Activated T-helper 2 cell treated with anti-CD3 and anti-CD28 coated beads, Interferon-gamma antibody, Interleukin-2, Interleukin-4, amounts not matched to agents 10 μg/mL and 5 μg/mL and 100 μg/mL, durations not matched to agents 14 hours and 24 hours and 36 hours (primary cell): ENCODE measurements at regions of chr3 and their contacts with region 1.

Region 1: DNA sequence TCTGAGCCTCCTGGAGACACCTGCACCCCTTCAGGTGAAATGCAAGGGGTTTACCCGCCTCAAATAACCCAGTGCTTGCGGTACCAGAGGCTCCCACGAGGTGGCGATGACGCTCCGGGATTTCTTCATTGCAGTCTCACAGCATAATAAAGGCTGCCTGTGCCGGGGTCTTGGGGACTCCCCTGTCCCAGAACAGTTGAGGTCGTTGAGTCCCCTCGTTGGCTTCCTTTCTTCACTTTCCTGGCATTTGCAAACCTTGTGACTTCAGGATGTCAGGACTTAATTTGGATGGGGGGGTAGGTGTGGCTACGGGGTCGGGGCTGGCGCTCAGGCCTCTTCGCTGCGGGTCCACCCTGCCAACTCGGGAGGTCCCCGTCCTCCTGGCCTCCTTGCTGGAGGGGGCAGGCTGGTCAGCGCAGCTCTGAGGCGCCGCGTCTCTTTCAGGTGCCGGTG is 1.3 kb downstream of the GNAT1 start:
- DNase-seq: peak; percentile 75
- H3K4me3 Mint-ChIP-seq: no peak overlapping the region
- H3K27ac Mint-ChIP-seq: no peak overlapping the region
- H3K4me1 Mint-ChIP-seq: peaks cover 2% of the 10 kb centered on the region
- H3K27me3 Mint-ChIP-seq: peaks cover 20% of the 10 kb centered on the region

Region 2: DNA sequence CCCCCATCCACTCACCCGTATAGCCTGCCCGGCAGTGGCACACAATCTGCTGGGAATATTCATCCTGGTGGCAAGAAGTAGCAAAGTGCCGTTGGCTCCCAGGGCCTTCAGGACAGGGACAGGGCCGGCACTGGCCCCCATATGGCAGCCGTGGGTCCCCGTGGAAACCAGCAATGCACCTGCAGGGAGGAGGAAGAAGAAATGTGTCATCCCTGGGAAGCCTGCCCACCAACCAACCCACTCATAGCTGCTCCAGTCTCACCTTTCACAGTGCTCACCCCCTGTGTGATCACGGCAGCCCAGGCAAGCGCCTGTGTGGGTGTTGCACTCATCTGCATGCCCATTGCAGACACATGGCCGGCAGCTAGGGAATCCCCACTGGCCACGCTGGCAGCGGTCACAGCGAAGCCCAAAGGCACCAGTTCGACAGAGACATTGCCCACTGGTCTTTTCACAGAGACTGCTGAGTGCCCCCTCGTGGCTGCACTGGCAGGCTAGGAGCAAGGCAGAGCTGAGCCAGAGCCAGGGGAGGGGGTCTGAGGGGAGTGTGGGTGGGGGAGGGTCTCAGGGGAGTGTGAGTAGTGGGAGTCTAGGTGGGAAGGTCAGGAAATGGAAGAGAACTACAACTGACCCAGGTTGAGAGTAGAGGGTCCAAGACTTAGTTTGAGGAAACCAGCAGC is 1067.6 kb before region 1 on chr3:
- intact Hi-C with region 1: no loop called
- DNase-seq: no peak
- H3K4me3 Mint-ChIP-seq: no peak overlapping the region
- H3K27ac Mint-ChIP-seq: no peak overlapping the region
- H3K4me1 Mint-ChIP-seq: no peaks in the 10 kb centered on the region
- H3K27me3 Mint-ChIP-seq: no peaks in the 10 kb centered on the region

Region 3: DNA sequence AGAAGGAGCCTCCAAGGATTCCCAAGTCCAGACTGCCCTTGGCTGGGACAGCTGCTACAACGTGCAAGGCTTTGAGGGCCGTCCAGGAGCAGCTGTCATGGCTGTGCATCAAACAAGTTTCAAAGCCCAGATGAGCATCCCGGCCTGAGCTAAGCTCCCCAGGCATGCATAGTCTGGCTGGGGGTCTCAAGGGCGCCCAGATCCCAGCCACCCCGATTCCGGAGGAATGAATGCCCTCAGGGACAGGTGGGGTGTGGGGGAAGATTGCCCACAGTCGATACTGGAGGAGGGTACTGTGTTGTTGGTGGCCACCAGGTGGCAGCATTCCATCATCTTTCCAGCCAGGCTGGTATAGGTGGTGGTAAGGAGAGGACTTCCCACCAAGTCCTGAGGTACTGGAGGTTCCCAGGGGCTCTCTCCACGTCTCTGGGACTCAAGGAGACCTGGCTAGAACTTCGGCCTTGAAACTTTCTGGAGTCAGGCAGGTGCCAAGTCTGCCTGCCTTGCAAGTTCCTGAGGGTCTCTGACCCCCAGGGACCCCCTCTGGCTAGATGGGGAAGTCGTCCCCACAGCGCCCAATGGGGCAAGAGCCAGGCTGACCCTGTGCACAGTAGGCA is 71.2 kb before region 1 on chr3:
- intact Hi-C with region 1: loop called (anchors 1 kb)
- DNase-seq: peak; percentile 55
- H3K4me3 Mint-ChIP-seq: no peak overlapping the region
- H3K27ac Mint-ChIP-seq: no peak overlapping the region
- H3K4me1 Mint-ChIP-seq: no peaks in the 10 kb centered on the region
- H3K27me3 Mint-ChIP-seq: no peaks in the 10 kb centered on the region